ENCODE measurements at regions of chr1 and their contacts with region 1.

Region 1: GRCh38 chr1:20696397-20697329 is 21.1 kb downstream of the KIF17 start:
- DNase-seq: peak; percentile 79 to 84 (median 84)
- ATAC-seq: peak; percentile 95
- H3K4me3 ChIP-seq: peak overlapping the region; percentile 7
- H3K4me1 ChIP-seq: peaks cover 2% of the 10 kb centered on the region
- CTCF ChIP-seq: peak; percentile 88

Region 2: DNA sequence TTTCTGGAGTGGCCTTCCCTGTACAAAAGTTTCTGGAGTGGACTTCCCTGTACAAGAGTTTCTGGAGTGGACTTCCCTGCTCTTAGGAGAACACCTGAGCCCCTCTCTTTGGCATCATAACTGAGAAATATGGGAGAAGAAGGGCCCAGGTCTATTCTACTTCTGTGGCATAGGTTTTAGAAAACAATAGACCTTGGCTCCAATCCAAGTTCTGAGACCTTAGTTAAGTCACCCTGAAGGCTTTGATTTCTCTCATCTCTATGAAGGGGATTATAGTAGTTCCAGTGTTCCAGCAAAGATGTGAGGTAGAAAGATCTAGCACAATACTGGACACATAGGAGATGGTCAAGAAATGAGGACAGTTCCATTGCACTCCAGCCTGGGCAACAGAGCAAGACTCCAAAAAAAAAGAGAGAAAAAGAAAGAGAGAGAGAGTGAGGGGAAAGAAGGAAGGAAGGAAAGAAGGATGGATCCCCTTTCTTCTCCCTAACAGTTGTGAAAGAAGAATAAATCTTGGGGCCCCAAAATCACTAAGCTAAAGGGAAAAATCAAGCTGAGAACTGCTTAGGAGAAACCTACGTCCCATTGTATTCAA is 493.3 kb after region 1 on chr1:
- intact Hi-C with region 1: loop called (anchors 5 to 10 kb)
- DNase-seq: no peak
- ATAC-seq: peak; percentile 6
- H3K4me3 ChIP-seq: no peak overlapping the region
- H3K4me1 ChIP-seq: peaks cover 12% of the 10 kb centered on the region
- CTCF ChIP-seq: no peak

Region 3: DNA sequence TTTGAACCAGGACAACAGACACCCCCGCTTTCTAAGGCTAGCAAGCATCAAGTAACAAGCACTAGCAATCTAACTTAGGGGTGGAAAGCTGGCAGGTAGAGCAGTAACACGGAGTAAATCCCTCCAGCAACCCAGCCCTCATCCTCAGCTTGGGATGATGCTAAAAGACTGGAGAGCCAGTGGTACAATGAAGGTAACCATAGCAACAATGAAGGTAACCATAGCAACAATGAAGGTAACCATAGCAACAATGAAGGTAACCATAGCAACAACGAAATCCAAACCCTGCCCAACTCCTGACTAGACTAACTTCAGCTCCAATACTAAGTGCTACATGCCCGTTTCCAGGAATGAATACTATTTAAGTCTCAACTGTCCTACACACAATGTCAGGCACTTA is 502.3 kb after region 1 on chr1:
- intact Hi-C with region 1: loop called (anchors 5 to 10 kb)
- DNase-seq: no peak
- ATAC-seq: no peak
- H3K4me3 ChIP-seq: no peak overlapping the region
- H3K4me1 ChIP-seq: peaks cover 7% of the 10 kb centered on the region
- CTCF ChIP-seq: no peak

Measured in mucosa of descending colon (tissue), 3 donors.